AG04449 (cell line): ENCODE measurements at regions of chr20 and their contacts with region 1.

Region 1: GRCh38 chr20:39070484-39071231 is 108.5 kb downstream of the DHX35 start:
- DNase-seq: peak; percentile 33
- H3K4me3 ChIP-seq: no peak overlapping the region
- CTCF ChIP-seq: no peak

Region 2: DNA sequence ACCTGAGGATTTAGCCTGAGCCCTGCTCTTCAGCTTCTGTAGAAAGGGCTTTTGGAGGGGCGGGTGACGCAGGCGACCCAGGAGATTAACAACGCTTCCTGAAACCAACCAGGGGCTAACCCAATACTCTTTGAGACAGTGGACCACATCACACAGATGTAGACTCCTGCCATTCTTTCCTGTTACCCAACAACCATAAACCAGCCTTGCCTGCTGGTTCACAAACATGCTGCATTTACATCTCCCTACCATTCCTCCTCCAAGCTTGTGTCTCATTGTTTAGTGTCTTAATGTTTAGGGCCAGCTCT is 236.8 kb before region 1 on chr20:
- CTCF ChIA-PET with region 1: no interaction called
- POLR2A ChIA-PET with region 1: no interaction called
- DNase-seq: no peak
- H3K4me3 ChIP-seq: no peak overlapping the region
- CTCF ChIP-seq: no peak

Region 3: GRCh38 chr20:39081255-39081654 is 10.6 kb after region 1 on chr20:
- CTCF ChIA-PET with region 1: interaction called, 97 read pairs
- POLR2A ChIA-PET with region 1: no interaction called
- DNase-seq: peak; percentile 28
- H3K4me3 ChIP-seq: no peak overlapping the region
- CTCF ChIP-seq: peak; percentile 86